Cardiac septum (tissue), 1 donor: ENCODE measurements at regions of chr18 and their contacts with region 1.

Region 1: DNA sequence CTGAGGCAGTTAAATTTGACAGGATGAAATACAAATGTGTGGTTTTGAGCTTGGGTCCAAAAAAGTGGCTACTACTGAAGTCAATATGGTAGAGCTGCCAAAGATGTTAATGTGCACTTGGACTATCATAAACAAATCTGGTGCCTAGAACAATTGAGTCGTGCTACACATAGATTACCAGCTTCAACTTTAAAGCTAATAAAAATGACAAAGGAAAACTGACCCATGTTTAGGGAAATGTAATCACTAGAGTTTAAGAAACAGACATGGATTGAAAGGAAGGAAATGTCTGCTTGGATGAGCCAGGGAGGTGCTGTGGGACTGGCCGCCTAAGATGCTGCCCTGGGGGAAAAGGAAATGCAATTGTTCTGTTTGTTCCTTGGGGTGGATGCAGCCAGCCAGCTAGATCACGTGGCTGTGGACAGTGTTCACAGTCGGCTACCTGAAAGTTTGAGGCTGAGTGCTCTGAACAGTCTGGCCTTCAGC is 36.6 kb downstream of the CYB5A start:
- DNase-seq: peak; percentile 76

Region 2: GRCh38 chr18:73986711-73987110 is 268.5 kb before region 1 on chr18:
- intact Hi-C with region 1: no loop called
- DNase-seq: no peak

Region 3: DNA sequence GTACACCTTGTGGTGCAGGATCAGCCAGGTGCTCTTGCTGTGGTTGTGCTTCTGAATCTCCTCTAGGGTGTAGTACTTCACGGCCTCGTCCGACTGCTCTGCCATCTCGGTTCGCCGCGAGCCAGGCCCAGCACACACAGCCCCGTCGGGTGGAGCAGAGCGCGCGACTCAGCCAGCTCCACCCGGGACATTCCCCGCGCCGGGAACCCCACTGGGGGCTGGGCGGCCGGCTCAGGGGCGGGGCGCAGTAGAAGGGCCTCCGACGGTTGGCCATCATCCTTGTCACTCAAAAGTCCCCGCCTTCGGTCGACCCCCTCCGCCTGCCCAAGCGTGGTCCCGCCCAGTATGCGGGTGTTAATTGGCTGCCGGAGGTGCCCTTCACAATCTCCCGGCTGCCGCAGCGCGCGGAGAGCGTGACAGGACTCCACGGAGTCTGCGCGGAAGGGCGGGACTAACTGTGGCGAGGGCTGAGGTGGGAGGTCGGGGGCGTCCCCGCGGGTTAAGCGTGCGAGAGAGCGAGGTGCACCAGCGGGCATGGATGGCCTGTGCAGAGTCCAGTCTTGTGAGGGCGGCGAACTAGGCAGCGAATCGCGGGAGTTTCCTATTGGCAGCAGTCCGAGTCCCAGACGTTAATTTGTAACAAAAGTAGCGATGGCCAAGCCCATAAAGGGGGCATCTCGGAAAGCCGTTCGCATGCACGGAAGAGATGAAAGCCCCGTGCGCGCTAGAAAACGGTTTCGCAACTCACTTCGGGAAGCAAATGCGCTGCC is 36.8 kb after region 1 on chr18 and contains the start of gene CYB5A:
- intact Hi-C with region 1: loop called (anchors 5 kb)
- DNase-seq: peak; percentile 99
- total RNA-seq, gene CYB5A: 57.2 TPM